ENCODE measurements at regions of chr7 and their contacts with region 1.

Region 1: GRCh38 chr7:21253740-21254687 is 173.9 kb upstream of the SP4 start:
- DNase-seq: peak in 4 of 5 donors; percentile 9 to 31 (median 26)
- H3K4me3 ChIP-seq: no peak overlapping the region
- H3K4me3 Mint-ChIP-seq: peak overlapping the region in 6 of 8 donors; percentile 23 to 58 (median 43)
- H3K27ac ChIP-seq: no peak overlapping the region
- H3K27ac Mint-ChIP-seq: no peak overlapping the region
- H3K4me1 ChIP-seq: peaks cover 5% of the 10 kb centered on the region
- H3K4me1 Mint-ChIP-seq: peaks cover 0 to 2% (median 0%) of the 10 kb centered on the region in 4 donors
- H3K27me3 ChIP-seq: peaks cover 6% of the 10 kb centered on the region
- H3K27me3 Mint-ChIP-seq: peaks cover 36 to 54% of the 10 kb centered on the region in 2 donors

Region 2: DNA sequence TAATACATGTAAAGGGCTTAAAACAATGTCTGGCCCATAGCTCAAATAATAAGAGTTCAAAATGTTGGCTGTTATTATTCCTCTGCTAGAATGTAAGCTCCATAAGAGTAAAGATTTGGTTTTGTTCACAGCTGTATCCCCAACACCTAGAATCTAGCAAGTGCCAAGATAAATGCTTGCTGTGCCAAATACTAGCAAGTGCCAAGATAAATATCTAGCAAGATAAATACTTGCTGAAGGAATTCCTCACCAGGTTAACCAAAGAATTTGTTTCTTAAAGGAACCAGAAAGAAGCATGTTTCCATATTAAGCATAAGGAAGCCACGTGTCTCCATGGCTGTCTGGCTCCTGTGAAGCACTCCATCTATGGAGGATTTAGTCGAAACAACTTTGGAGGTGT is 61.4 kb before region 1 on chr7:
- CTCF ChIA-PET with region 1: no interaction called
- POLR2A ChIA-PET with region 1: no interaction called
- intact Hi-C with region 1: no loop called
- DNase-seq: no peak
- H3K4me3 ChIP-seq: no peak overlapping the region
- H3K4me3 Mint-ChIP-seq: no peak overlapping the region
- H3K27ac ChIP-seq: no peak overlapping the region
- H3K27ac Mint-ChIP-seq: no peak overlapping the region
- H3K4me1 ChIP-seq: no peaks in the 10 kb centered on the region
- H3K4me1 Mint-ChIP-seq: peaks cover 0 to 5% (median 3%) of the 10 kb centered on the region in 4 donors
- H3K27me3 ChIP-seq: no peaks in the 10 kb centered on the region
- H3K27me3 Mint-ChIP-seq: peaks cover 2 to 10% of the 10 kb centered on the region in 2 donors

Region 3: DNA sequence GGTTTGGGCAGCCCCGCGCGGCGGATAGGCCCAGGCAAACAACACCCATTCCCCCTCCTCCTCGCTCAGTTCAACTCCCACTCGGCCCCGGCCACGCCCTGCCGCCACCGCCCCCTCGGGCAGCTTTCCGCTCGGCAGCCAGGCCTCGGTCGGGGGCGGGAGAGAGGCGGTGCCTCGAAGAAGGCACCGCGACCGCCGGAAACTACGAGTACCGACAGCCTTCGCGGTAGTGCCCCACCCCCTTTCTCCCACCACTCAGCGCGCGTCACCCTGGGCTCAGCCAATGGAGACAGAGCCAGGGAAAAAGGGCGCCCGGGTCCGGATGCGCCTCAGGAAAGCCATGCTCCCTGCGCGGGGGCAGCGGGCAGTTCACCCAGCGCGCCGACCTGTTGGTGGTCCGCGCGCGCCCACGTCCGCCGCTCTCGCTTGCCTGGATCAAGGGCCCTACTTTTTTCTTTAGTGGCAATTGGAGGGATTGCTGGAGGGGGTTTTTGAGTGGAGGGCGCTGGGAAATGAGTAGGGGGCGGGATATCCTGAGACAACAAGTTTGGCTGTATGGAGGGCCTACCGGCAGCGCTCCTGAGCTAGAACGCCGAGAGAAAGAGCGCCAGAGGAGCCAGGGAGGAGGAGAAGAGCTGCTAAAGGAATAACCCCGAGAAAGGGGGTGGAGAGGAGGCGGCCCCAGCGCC is 173.3 kb after region 1 on chr7:
- CTCF ChIA-PET with region 1: interaction called, 3 read pairs
- POLR2A ChIA-PET with region 1: interaction called, 3 read pairs
- intact Hi-C with region 1: loop called (anchors 1 kb)
- DNase-seq: peak; percentile 99 to 100 (median 100)
- H3K4me3 ChIP-seq: peak overlapping the region; percentile 93
- H3K4me3 Mint-ChIP-seq: peak overlapping the region; percentile 95 to 100 (median 99)
- H3K27ac ChIP-seq: peak overlapping the region; percentile 93
- H3K27ac Mint-ChIP-seq: peak overlapping the region; percentile 98 to 100 (median 99)
- H3K4me1 ChIP-seq: peaks cover 49% of the 10 kb centered on the region
- H3K4me1 Mint-ChIP-seq: peaks cover 30 to 56% (median 43%) of the 10 kb centered on the region in 4 donors
- H3K27me3 ChIP-seq: no peaks in the 10 kb centered on the region
- H3K27me3 Mint-ChIP-seq: no peaks in the 10 kb centered on the region

Region 4: GRCh38 chr7:21526007-21526406 is 272.0 kb after region 1 on chr7:
- CTCF ChIA-PET with region 1: interaction called, 11 read pairs
- POLR2A ChIA-PET with region 1: no interaction called
- intact Hi-C with region 1: loop called (anchors 1 kb)
- DNase-seq: peak in 3 of 5 donors; percentile 9 to 23 (median 18)
- H3K4me3 ChIP-seq: no peak overlapping the region
- H3K4me3 Mint-ChIP-seq: no peak overlapping the region
- H3K27ac ChIP-seq: no peak overlapping the region
- H3K27ac Mint-ChIP-seq: no peak overlapping the region
- H3K4me1 ChIP-seq: no peaks in the 10 kb centered on the region
- H3K4me1 Mint-ChIP-seq: no peaks in the 10 kb centered on the region
- H3K27me3 ChIP-seq: no peaks in the 10 kb centered on the region
- H3K27me3 Mint-ChIP-seq: no peaks in the 10 kb centered on the region

Region 5: GRCh38 chr7:21767300-21767900 is 513.4 kb after region 1 on chr7:
- CTCF ChIA-PET with region 1: interaction called, 5 read pairs
- POLR2A ChIA-PET with region 1: no interaction called
- intact Hi-C with region 1: loop called (anchors 2 kb)
- DNase-seq: peak in 2 of 5 donors; percentile 2 to 7
- H3K4me3 ChIP-seq: no peak overlapping the region
- H3K4me3 Mint-ChIP-seq: no peak overlapping the region
- H3K27ac ChIP-seq: no peak overlapping the region
- H3K27ac Mint-ChIP-seq: no peak overlapping the region
- H3K4me1 ChIP-seq: no peaks in the 10 kb centered on the region
- H3K4me1 Mint-ChIP-seq: no peaks in the 10 kb centered on the region
- H3K27me3 ChIP-seq: no peaks in the 10 kb centered on the region
- H3K27me3 Mint-ChIP-seq: peaks cover 2 to 7% of the 10 kb centered on the region in 2 donors

Region 6: GRCh38 chr7:22082886-22083703 is 829.1 kb after region 1 on chr7:
- CTCF ChIA-PET with region 1: interaction called, 8 read pairs
- POLR2A ChIA-PET with region 1: no interaction called
- intact Hi-C with region 1: loop called (anchors 1 kb)
- DNase-seq: peak; percentile 71 to 84 (median 75)
- H3K4me3 ChIP-seq: peak overlapping the region; percentile 49 to 70
- H3K4me3 Mint-ChIP-seq: peak overlapping the region; percentile 83 to 90 (median 87)
- H3K27ac ChIP-seq: peak overlapping the region; percentile 18
- H3K27ac Mint-ChIP-seq: peak overlapping the region in 5 of 7 donors; percentile 50 to 81 (median 66)
- H3K4me1 ChIP-seq: peaks cover 12% of the 10 kb centered on the region
- H3K4me1 Mint-ChIP-seq: peaks cover 6 to 19% (median 13%) of the 10 kb centered on the region in 4 donors
- H3K27me3 ChIP-seq: no peaks in the 10 kb centered on the region
- H3K27me3 Mint-ChIP-seq: peaks cover 11 to 20% of the 10 kb centered on the region in 2 donors

Region 7: DNA sequence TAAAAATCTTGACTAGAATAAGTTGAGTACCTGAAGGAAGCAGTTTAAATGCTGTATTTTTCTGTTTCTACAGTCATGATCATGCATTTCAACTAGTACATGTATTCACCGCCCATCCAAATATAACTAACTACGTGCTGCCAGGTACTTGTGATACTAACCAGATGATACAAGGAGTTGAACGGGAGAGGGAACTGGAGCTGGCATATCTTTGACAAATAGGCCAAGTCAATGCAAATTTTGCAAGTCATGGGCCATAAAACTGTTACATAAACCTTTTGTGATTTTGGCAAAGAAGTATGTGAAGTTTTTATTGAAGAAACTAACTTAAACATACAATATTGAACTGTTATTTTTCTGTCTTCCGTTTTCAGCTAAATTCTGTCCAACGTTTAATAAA is 1942.3 kb after region 1 on chr7:
- CTCF ChIA-PET with region 1: no interaction called
- POLR2A ChIA-PET with region 1: no interaction called
- intact Hi-C with region 1: no loop called
- DNase-seq: no peak
- H3K4me3 ChIP-seq: no peak overlapping the region
- H3K4me3 Mint-ChIP-seq: no peak overlapping the region
- H3K27ac ChIP-seq: no peak overlapping the region
- H3K27ac Mint-ChIP-seq: no peak overlapping the region
- H3K4me1 ChIP-seq: no peaks in the 10 kb centered on the region
- H3K4me1 Mint-ChIP-seq: peaks cover 0 to 2% (median 0%) of the 10 kb centered on the region in 4 donors
- H3K27me3 ChIP-seq: no peaks in the 10 kb centered on the region
- H3K27me3 Mint-ChIP-seq: no peaks in the 10 kb centered on the region

Measured in CD4-positive, alpha-beta memory T cell (primary cell).